Mammary epithelial cell (primary cell): ENCODE measurements at regions of chr12 and their contacts with region 1.

Region 1: GRCh38 chr12:678747-679712 is 15.8 kb upstream of the NINJ2 start:
- DNase-seq: no peak
- H3K4me3 ChIP-seq: no peak overlapping the region
- H3K27ac ChIP-seq: no peak overlapping the region
- H3K4me1 ChIP-seq: peaks cover 4% of the 10 kb centered on the region
- H3K27me3 ChIP-seq: no peaks in the 10 kb centered on the region
- CTCF ChIP-seq: no peak

Region 2: DNA sequence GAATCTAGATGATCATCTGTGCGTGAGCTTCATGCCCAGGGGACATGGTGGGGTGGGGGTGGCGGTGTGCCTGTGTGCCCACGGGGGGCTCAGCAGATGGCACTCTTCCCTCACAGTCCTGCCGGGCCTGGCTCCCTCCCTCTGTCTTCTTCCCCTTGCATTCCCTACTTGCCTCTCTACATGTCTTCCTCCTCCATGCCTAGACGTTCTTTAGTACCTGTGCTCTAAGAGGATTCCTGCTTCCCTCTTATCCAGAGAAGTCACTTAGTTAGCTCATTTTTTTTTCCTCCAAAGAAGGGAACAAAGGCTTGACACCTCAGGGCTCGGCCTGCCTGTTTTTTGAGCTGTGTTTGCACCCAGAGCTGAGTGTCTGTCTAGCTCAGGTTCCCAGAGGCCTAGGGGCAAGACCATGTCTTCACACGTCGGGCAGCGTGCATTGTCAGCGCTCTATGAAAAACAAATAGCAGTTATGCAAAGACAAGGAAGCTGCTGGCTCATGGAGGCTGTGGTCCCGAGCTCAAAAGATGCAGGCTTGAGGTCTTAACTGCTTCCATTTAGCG is 64.5 kb before region 1 on chr12:
- CTCF ChIA-PET with region 1: no interaction called
- dilution Hi-C with region 1: loop called (anchors 5 kb)
- in situ Hi-C with region 1: no loop called
- intact Hi-C with region 1: no loop called
- DNase-seq: no peak
- H3K4me3 ChIP-seq: no peak overlapping the region
- H3K27ac ChIP-seq: no peak overlapping the region
- H3K4me1 ChIP-seq: peaks cover 8% of the 10 kb centered on the region
- H3K27me3 ChIP-seq: no peaks in the 10 kb centered on the region
- CTCF ChIP-seq: no peak

Region 3: GRCh38 chr12:690466-690865 is 11.4 kb after region 1 on chr12:
- CTCF ChIA-PET with region 1: no interaction called
- dilution Hi-C with region 1: no loop called
- in situ Hi-C with region 1: no loop called
- intact Hi-C with region 1: no loop called
- DNase-seq: no peak
- H3K4me3 ChIP-seq: no peak overlapping the region
- H3K27ac ChIP-seq: no peak overlapping the region
- H3K4me1 ChIP-seq: no peaks in the 10 kb centered on the region
- H3K27me3 ChIP-seq: no peaks in the 10 kb centered on the region
- CTCF ChIP-seq: no peak

Region 4: DNA sequence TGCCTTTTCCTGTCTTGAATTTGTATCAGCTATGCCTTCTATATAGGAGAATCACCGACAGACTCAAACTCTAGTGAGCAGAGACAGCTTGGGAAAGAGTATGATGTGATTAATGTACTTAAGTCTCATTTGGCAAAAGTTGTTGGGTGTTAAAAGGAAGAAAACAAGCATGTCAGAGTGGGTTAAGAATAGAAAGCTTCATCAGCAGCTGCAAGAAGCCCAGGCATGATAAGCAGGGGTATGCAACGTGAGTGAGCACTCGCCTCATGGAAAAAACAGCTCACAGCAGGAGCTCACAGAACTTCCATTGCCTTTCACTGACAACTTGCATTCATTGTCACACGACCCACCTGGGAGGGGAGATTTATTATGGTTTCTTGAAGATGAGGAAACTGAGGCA is 37.5 kb after region 1 on chr12:
- CTCF ChIA-PET with region 1: no interaction called
- dilution Hi-C with region 1: no loop called
- in situ Hi-C with region 1: no loop called
- intact Hi-C with region 1: no loop called
- DNase-seq: no peak
- H3K4me3 ChIP-seq: no peak overlapping the region
- H3K27ac ChIP-seq: no peak overlapping the region
- H3K4me1 ChIP-seq: no peaks in the 10 kb centered on the region
- H3K27me3 ChIP-seq: no peaks in the 10 kb centered on the region
- CTCF ChIP-seq: no peak

Region 5: GRCh38 chr12:730550-730949 is 51.5 kb after region 1 on chr12:
- CTCF ChIA-PET with region 1: no interaction called
- dilution Hi-C with region 1: loop called (anchors 5 kb)
- in situ Hi-C with region 1: no loop called
- intact Hi-C with region 1: no loop called
- DNase-seq: no peak
- H3K4me3 ChIP-seq: no peak overlapping the region
- H3K27ac ChIP-seq: no peak overlapping the region
- H3K4me1 ChIP-seq: peaks cover 9% of the 10 kb centered on the region
- H3K27me3 ChIP-seq: no peaks in the 10 kb centered on the region
- CTCF ChIP-seq: no peak

Region 6: GRCh38 chr12:789852-790563 is 111.0 kb after region 1 on chr12:
- CTCF ChIA-PET with region 1: no interaction called
- dilution Hi-C with region 1: no loop called
- in situ Hi-C with region 1: no loop called
- intact Hi-C with region 1: no loop called
- DNase-seq: no peak
- H3K4me3 ChIP-seq: no peak overlapping the region
- H3K27ac ChIP-seq: no peak overlapping the region
- H3K4me1 ChIP-seq: peaks cover 21% of the 10 kb centered on the region
- H3K27me3 ChIP-seq: no peaks in the 10 kb centered on the region
- CTCF ChIP-seq: no peak